Testis (tissue), 5 donors: ENCODE measurements at regions of chr7 and their contacts with region 1.

Region 1: GRCh38 chr7:786472-787255 is 45.6 kb upstream of the SUN1 start:
- DNase-seq: peak; percentile 73
- H3K4me3 ChIP-seq: no peak overlapping the region
- H3K27ac ChIP-seq: no peak overlapping the region
- H3K4me1 ChIP-seq: no peaks in the 10 kb centered on the region
- H3K27me3 ChIP-seq: no peaks in the 10 kb centered on the region
- CTCF ChIP-seq: peak; percentile 71 to 86 (median 82)
- POLR2A ChIP-seq: no peak

Region 2: GRCh38 chr7:873367-874002 is 86.8 kb after region 1 on chr7:
- intact Hi-C with region 1: loop called (anchors 5 kb)
- DNase-seq: peak; percentile 94
- H3K4me3 ChIP-seq: no peak overlapping the region
- H3K27ac ChIP-seq: peak overlapping the region; percentile 68 to 96
- H3K4me1 ChIP-seq: peaks cover 23% of the 10 kb centered on the region
- H3K27me3 ChIP-seq: no peaks in the 10 kb centered on the region
- CTCF ChIP-seq: peak; percentile 80 to 93 (median 92)
- POLR2A ChIP-seq: no peak

Region 3: DNA sequence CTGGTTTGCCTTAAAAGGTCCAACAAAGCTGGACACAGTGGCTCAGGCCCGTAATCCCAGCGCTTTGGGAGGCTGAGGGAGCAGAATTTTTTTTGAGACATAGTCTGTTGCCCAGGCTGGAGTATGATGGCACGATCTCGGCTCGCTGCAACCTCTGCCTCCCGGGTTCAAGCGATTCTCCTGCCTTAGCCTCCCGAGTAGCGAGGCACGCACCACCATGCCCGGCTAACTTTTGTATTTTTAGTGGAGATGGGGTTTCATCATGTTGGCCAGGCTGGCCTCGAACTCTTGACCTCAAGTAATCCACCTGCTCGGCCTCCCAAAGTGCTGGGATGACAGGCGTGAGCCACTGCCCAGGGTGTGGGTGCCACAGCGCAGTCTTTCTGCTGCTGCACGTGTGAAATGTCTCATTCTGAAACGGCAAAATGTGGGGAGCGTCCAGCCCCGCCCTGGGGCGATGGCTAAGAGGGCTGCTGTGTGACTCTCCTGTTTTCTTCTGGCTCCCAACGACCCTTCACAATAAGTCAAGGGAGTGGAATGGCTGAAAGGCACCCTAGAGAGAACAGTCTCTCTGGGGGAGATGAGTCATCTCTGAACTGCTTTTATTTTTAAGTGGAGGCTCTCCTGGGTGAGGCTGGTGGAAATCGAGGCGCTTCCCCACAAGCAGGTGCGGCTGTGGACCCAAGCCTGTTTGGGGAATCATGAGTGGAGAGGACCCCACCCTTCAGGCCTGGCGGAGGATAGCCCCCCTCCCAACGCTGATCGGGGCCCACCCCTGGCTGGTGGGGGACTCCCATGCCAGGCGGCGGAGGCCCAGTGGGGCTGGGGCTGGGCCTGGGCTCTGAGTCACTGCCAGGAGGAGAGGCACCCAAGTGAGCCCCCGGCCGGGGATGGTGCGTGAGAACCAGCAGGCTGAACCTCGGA is 149.7 kb after region 1 on chr7:
- intact Hi-C with region 1: no loop called
- DNase-seq: no peak
- H3K4me3 ChIP-seq: no peak overlapping the region
- H3K27ac ChIP-seq: no peak overlapping the region
- H3K4me1 ChIP-seq: no peaks in the 10 kb centered on the region
- H3K27me3 ChIP-seq: no peaks in the 10 kb centered on the region
- CTCF ChIP-seq: no peak
- POLR2A ChIP-seq: no peak